Tibial artery (tissue), 4 donors: ENCODE measurements at regions of chr10 and their contacts with region 1.

Region 1: GRCh38 chr10:59633063-59633462 is 76.6 kb downstream of the SLC16A9 start:
- DNase-seq: no peak
- H3K4me3 ChIP-seq: no peak overlapping the region
- H3K27ac ChIP-seq: no peak overlapping the region
- H3K4me1 ChIP-seq: no peaks in the 10 kb centered on the region
- H3K27me3 ChIP-seq: no peaks in the 10 kb centered on the region
- CTCF ChIP-seq: no peak

Region 2: GRCh38 chr10:59709395-59710125 is 76.5 kb after region 1 on chr10 and contains the start of gene SLC16A9:
- intact Hi-C with region 1: loop called (anchors 5 kb)
- DNase-seq: peak; percentile 42 to 80
- H3K4me3 ChIP-seq: peak within 1 kb of the TSS; percentile 71 to 85
- H3K27ac ChIP-seq: peak within 1 kb of the TSS; percentile 81 to 83
- H3K4me1 ChIP-seq: peaks cover 0 to 35% (median 19%) of the 10 kb centered on the region in 4 donors
- H3K27me3 ChIP-seq: no peaks in the 10 kb centered on the region
- CTCF ChIP-seq: peak; percentile 34 to 41

Region 3: GRCh38 chr10:59808896-59809643 is 176.0 kb after region 1 on chr10:
- intact Hi-C with region 1: loop called (anchors 10 kb)
- DNase-seq: peak; percentile 66 to 81
- H3K4me3 ChIP-seq: no peak overlapping the region
- H3K27ac ChIP-seq: peak overlapping the region; percentile 13 to 66
- H3K4me1 ChIP-seq: peaks cover 0 to 26% (median 3%) of the 10 kb centered on the region in 4 donors
- H3K27me3 ChIP-seq: no peaks in the 10 kb centered on the region
- CTCF ChIP-seq: peak; percentile 54 to 59